Activated naive CD4-positive, alpha-beta T cell treated with anti-CD3 and anti-CD28 coated beads for 36 hours (primary cell): ENCODE measurements at regions of chrX and their contacts with region 1.

Region 1: DNA sequence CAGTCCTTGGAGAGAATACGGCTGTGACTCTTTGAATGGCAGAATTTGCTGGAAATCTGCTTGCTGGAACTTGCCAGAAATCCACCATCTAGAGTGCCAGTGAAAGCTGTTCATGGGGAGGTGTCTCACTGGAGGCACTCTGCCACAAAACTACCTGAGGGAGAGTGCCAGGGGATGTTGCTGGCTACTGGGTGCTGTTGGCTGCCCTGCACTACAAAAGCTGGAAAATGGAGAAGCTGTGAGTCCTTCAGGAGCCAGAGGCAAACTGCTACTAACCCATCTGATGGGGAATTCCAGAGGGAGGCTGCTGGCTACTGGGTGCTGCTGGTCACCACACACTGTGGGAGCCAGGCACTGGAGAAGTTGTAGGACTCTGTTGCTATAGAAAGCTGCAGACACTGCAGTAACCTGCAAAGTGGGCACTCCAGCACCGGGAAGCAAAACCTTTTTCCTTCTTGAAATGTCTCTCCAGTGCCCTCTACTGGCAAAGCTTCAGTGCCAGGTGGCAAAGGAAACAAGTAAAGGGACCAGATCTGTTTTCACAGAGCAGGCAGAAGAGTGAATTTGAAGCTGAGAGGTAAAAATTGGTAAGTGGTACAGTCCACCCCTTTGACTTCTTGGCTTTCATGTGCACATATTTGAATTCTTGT is 47.8 kb upstream of the HSD17B10 start:
- DNase-seq: peak; percentile 63
- H3K4me3 Mint-ChIP-seq: no peak overlapping the region
- H3K27ac Mint-ChIP-seq: no peak overlapping the region
- H3K4me1 Mint-ChIP-seq: no peaks in the 10 kb centered on the region
- H3K27me3 Mint-ChIP-seq: no peaks in the 10 kb centered on the region

Region 2: GRCh38 chrX:53284684-53285447 is 197.1 kb before region 1 on chrX:
- CTCF ChIA-PET with region 1: interaction called, 11 read pairs
- intact Hi-C with region 1: no loop called
- DNase-seq: peak; percentile 51
- H3K4me3 Mint-ChIP-seq: no peak overlapping the region
- H3K27ac Mint-ChIP-seq: no peak overlapping the region
- H3K4me1 Mint-ChIP-seq: peaks cover 21% of the 10 kb centered on the region
- H3K27me3 Mint-ChIP-seq: no peaks in the 10 kb centered on the region

Region 3: GRCh38 chrX:53441531-53442321 is 40.2 kb before region 1 on chrX:
- CTCF ChIA-PET with region 1: interaction called, 8 read pairs
- intact Hi-C with region 1: loop called (anchors 5 kb)
- DNase-seq: peak; percentile 72
- H3K4me3 Mint-ChIP-seq: peak overlapping the region; percentile 78
- H3K27ac Mint-ChIP-seq: no peak overlapping the region
- H3K4me1 Mint-ChIP-seq: peaks cover 26% of the 10 kb centered on the region
- H3K27me3 Mint-ChIP-seq: no peaks in the 10 kb centered on the region

Region 4: GRCh38 chrX:53494436-53494835 is 12.5 kb after region 1 on chrX:
- CTCF ChIA-PET with region 1: interaction called, 14 read pairs
- intact Hi-C with region 1: no loop called
- DNase-seq: no peak
- H3K4me3 Mint-ChIP-seq: no peak overlapping the region
- H3K27ac Mint-ChIP-seq: no peak overlapping the region
- H3K4me1 Mint-ChIP-seq: no peaks in the 10 kb centered on the region
- H3K27me3 Mint-ChIP-seq: no peaks in the 10 kb centered on the region

Region 5: GRCh38 chrX:53631156-53631555 is 149.2 kb after region 1 on chrX:
- CTCF ChIA-PET with region 1: no interaction called
- intact Hi-C with region 1: no loop called
- DNase-seq: no peak
- H3K4me3 Mint-ChIP-seq: no peak overlapping the region
- H3K27ac Mint-ChIP-seq: no peak overlapping the region
- H3K4me1 Mint-ChIP-seq: peaks cover 5% of the 10 kb centered on the region
- H3K27me3 Mint-ChIP-seq: no peaks in the 10 kb centered on the region